ENCODE measurements at regions of chr2 and their contacts with region 1.

Region 1: GRCh38 chr2:102753563-102754159 is 8.2 kb upstream of the TMEM182 start:
- DNase-seq: peak in 1 of 2 experiments; percentile 31
- H3K4me3 ChIP-seq: no peak overlapping the region
- H3K4me3 Mint-ChIP-seq: no peak overlapping the region
- H3K27ac Mint-ChIP-seq: no peak overlapping the region
- H3K4me1 ChIP-seq: no peaks in the 10 kb centered on the region
- H3K4me1 Mint-ChIP-seq: no peaks in the 10 kb centered on the region
- H3K27me3 ChIP-seq: no peaks in the 10 kb centered on the region
- H3K27me3 Mint-ChIP-seq: no peaks in the 10 kb centered on the region
- CTCF ChIP-seq: peak; percentile 73 to 76

Region 2: DNA sequence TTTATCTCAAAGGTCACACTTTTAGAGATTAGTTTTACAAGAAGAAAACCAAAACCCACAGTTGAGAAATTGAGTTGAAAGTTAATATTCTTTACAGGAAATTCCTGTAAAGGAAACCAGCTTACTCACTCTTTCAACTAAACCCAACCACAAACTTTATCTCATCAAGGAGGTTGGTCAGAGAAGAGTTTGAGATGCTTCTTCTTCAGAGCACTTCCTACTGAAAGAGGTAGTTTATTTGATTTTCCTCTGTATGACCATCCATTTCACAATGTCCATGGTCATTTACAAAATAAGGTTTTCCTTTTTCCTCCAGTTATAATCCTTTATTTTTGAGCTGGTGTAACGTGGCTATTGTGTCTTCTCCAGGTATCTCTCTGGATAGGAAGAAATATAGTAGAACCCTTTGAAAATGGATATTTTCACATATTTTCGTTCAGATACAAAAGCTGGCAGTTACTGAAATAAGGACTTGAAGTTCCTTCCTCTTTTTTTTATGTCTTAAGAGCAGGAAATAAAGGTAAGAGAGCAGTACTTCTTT is 335.2 kb before region 1 on chr2:
- CTCF ChIA-PET with region 1: no interaction called
- POLR2A ChIA-PET with region 1: no interaction called
- intact Hi-C with region 1: no loop called
- DNase-seq: no peak
- H3K4me3 ChIP-seq: no peak overlapping the region
- H3K4me3 Mint-ChIP-seq: no peak overlapping the region
- H3K27ac Mint-ChIP-seq: no peak overlapping the region
- H3K4me1 ChIP-seq: no peaks in the 10 kb centered on the region
- H3K4me1 Mint-ChIP-seq: no peaks in the 10 kb centered on the region
- H3K27me3 ChIP-seq: peaks cover 2% of the 10 kb centered on the region; the same call in 1 of the 2 replicates
- H3K27me3 Mint-ChIP-seq: peaks cover 21% of the 10 kb centered on the region
- CTCF ChIP-seq: no peak

Region 3: GRCh38 chr2:102736410-102737409 is 17.0 kb before region 1 on chr2:
- CTCF ChIA-PET with region 1: interaction called, 18 read pairs
- POLR2A ChIA-PET with region 1: interaction called, 6 read pairs
- intact Hi-C with region 1: no loop called
- DNase-seq: peak; percentile 81 to 91
- H3K4me3 ChIP-seq: peak overlapping the region; percentile 72
- H3K4me3 Mint-ChIP-seq: peak overlapping the region; percentile 94
- H3K27ac Mint-ChIP-seq: peak overlapping the region; percentile 93
- H3K4me1 ChIP-seq: no peaks in the 10 kb centered on the region
- H3K4me1 Mint-ChIP-seq: no peaks in the 10 kb centered on the region
- H3K27me3 ChIP-seq: no peaks in the 10 kb centered on the region
- H3K27me3 Mint-ChIP-seq: no peaks in the 10 kb centered on the region
- CTCF ChIP-seq: no peak

Region 4: DNA sequence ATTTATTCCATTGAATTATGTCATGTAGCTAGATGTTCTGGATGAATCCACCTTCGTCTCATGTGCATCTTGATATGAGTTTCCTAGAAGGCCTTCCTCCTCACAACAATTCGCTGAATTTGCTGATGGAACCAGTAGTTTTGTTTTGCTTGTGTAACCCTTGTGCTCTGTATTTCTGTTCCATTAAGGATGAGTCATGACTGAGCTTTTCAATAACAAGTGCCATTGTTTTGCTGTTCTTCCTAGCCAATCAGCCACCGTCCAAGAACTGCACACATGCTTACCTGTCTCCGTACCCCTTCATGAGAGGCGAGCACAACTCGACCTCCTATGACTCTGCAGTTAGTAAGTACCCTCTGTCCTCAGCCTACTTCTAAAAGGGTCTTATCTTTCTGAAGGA is 10.4 kb after region 1 on chr2:
- CTCF ChIA-PET with region 1: interaction called, 15 read pairs
- POLR2A ChIA-PET with region 1: no interaction called
- intact Hi-C with region 1: no loop called
- DNase-seq: no peak
- H3K4me3 ChIP-seq: no peak overlapping the region
- H3K4me3 Mint-ChIP-seq: no peak overlapping the region
- H3K27ac Mint-ChIP-seq: no peak overlapping the region
- H3K4me1 ChIP-seq: no peaks in the 10 kb centered on the region
- H3K4me1 Mint-ChIP-seq: no peaks in the 10 kb centered on the region
- H3K27me3 ChIP-seq: no peaks in the 10 kb centered on the region
- H3K27me3 Mint-ChIP-seq: no peaks in the 10 kb centered on the region
- CTCF ChIP-seq: no peak

Region 5: GRCh38 chr2:102806250-102806837 is 52.7 kb after region 1 on chr2:
- CTCF ChIA-PET with region 1: interaction called, 29 read pairs
- POLR2A ChIA-PET with region 1: no interaction called
- intact Hi-C with region 1: loop called (anchors 1 kb)
- DNase-seq: peak; percentile 66 to 80
- H3K4me3 ChIP-seq: no peak overlapping the region
- H3K4me3 Mint-ChIP-seq: no peak overlapping the region
- H3K27ac Mint-ChIP-seq: no peak overlapping the region
- H3K4me1 ChIP-seq: peaks cover 10% of the 10 kb centered on the region
- H3K4me1 Mint-ChIP-seq: no peaks in the 10 kb centered on the region
- H3K27me3 ChIP-seq: no peaks in the 10 kb centered on the region
- H3K27me3 Mint-ChIP-seq: no peaks in the 10 kb centered on the region
- CTCF ChIP-seq: peak; percentile 85 to 90

Region 6: GRCh38 chr2:102872388-102872787 is 118.7 kb after region 1 on chr2:
- CTCF ChIA-PET with region 1: interaction called, 7 read pairs
- POLR2A ChIA-PET with region 1: no interaction called
- intact Hi-C with region 1: loop called (anchors 1 kb)
- DNase-seq: no peak
- H3K4me3 ChIP-seq: no peak overlapping the region
- H3K4me3 Mint-ChIP-seq: no peak overlapping the region
- H3K27ac Mint-ChIP-seq: no peak overlapping the region
- H3K4me1 ChIP-seq: no peaks in the 10 kb centered on the region
- H3K4me1 Mint-ChIP-seq: no peaks in the 10 kb centered on the region
- H3K27me3 ChIP-seq: no peaks in the 10 kb centered on the region; the same call in 1 of the 2 replicates
- H3K27me3 Mint-ChIP-seq: peaks cover 4% of the 10 kb centered on the region
- CTCF ChIP-seq: peak; percentile 22 to 37

Region 7: GRCh38 chr2:103010751-103011150 is 257.1 kb after region 1 on chr2:
- CTCF ChIA-PET with region 1: no interaction called
- POLR2A ChIA-PET with region 1: no interaction called
- intact Hi-C with region 1: no loop called
- DNase-seq: no peak
- H3K4me3 ChIP-seq: no peak overlapping the region
- H3K4me3 Mint-ChIP-seq: no peak overlapping the region
- H3K27ac Mint-ChIP-seq: no peak overlapping the region
- H3K4me1 ChIP-seq: no peaks in the 10 kb centered on the region
- H3K4me1 Mint-ChIP-seq: no peaks in the 10 kb centered on the region
- H3K27me3 ChIP-seq: no peaks in the 10 kb centered on the region; the same call in 1 of the 2 replicates
- H3K27me3 Mint-ChIP-seq: peaks cover 11% of the 10 kb centered on the region
- CTCF ChIP-seq: no peak